ENCODE measurements at regions of chr1 and their contacts with region 1.

Region 1: DNA sequence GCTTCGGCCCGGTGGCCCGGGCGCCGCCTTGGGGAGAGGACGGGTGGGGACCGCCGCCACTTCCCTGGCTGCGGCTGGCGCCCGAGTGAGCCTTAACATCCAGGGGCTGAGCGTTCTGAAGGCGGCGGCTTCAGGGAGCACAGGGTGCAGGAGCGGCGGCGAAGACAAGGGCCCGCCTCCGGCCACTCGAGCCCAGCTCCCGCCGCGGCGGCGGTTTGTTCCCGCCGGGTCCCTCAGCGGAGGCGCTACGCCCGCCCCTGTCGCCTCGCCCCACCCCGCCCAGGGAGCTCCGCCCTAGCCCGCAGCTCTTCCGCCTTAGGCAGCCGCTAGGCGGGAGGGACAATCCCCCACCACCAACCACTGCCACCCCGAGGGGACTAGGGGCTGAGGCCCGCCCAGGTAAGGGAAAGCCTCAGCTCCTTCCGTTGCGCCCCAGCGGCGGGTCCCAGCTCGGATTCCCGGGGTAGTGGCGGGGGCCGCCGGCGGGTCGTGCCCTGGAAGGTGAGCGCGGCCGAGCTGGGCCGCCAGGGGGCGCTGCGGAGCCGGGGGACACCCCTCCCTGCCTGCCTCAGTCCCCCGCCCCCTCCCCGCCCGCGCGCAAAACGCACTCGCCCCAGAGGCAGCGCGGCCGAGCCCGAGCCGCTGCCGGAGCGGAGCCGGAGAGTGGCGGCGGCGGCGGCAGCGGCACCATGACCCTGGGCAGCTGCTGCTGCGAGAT is at the start of gene FOXD2:
- DNase-seq: peak; percentile 86
- ATAC-seq: peak; percentile 82
- H3K4me3 ChIP-seq: peak within 1 kb of the TSS; percentile 77
- H3K27ac ChIP-seq: no peak within 1 kb of the TSS
- H3K4me1 ChIP-seq: peaks cover 12% of the 10 kb centered on the region; the same call in 1 of the 2 replicates
- H3K27me3 ChIP-seq: no peaks in the 10 kb centered on the region
- CTCF ChIP-seq: peak; percentile 75
- total RNA-seq, gene FOXD2: 0.80 and 0.86 TPM in 2 replicates

Region 2: GRCh38 chr1:47333922-47334764 is 103.5 kb before region 1 on chr1:
- CTCF ChIA-PET with region 1: interaction called, 11 read pairs
- POLR2A ChIA-PET with region 1: interaction called, 8 read pairs
- intact Hi-C with region 1: no loop called
- DNase-seq: peak; percentile 81
- ATAC-seq: peak; percentile 86
- H3K4me3 ChIP-seq: peak overlapping the region; percentile 90
- H3K27ac ChIP-seq: peak overlapping the region; percentile 57
- H3K4me1 ChIP-seq: peaks cover 11% of the 10 kb centered on the region
- H3K27me3 ChIP-seq: no peaks in the 10 kb centered on the region
- CTCF ChIP-seq: no peak

Region 3: DNA sequence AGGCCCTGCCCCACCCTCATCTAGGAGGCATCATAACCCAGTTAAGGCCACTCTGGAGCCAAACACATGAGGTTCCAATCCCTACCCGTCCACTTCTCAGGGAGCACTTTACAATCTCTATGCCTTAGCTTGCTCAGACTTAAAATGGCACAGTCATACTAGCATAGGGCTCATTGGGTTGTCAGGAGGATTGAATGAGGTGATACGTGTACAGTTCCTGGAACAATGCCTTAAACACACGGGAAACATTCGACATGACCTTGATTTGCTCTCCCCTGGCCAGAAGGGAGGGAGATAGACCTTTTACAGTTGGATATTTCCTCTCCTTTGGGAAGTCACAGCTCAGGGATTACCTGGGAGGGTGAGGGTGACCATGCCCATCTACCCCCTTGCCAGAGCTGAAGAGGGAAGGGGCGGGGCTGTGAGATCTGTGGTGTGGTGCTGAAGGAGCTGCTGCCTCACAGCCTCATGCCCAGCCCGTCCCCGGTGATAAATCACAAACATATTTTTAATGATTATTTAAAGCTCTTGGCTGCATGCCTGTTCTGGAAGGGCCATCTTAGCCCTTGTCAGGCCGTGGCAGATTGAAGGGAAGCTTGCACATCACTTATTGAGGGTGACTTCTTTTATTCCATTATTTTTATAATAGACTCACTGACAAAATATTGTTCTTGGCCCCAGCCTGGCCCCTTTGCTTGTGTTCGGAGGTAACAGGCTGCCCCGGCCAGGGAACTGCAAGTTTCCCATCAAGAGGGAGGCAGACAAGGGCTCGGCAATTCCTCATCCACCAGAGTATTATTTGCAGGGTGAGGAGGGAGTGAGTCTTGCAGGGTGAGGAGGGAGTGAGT is 83.7 kb after region 1 on chr1:
- CTCF ChIA-PET with region 1: interaction called, 10 read pairs
- POLR2A ChIA-PET with region 1: no interaction called
- intact Hi-C with region 1: no loop called
- DNase-seq: no peak
- ATAC-seq: no peak
- H3K4me3 ChIP-seq: no peak overlapping the region
- H3K27ac ChIP-seq: no peak overlapping the region
- H3K4me1 ChIP-seq: no peaks in the 10 kb centered on the region
- H3K27me3 ChIP-seq: no peaks in the 10 kb centered on the region
- CTCF ChIP-seq: no peak

Region 4: GRCh38 chr1:47710329-47711071 is 272.9 kb after region 1 on chr1:
- CTCF ChIA-PET with region 1: interaction called, 11 read pairs
- POLR2A ChIA-PET with region 1: no interaction called
- intact Hi-C with region 1: loop called (anchors 1 kb)
- DNase-seq: peak; percentile 77
- ATAC-seq: peak; percentile 89
- H3K4me3 ChIP-seq: peak overlapping the region; percentile 66
- H3K27ac ChIP-seq: no peak overlapping the region
- H3K4me1 ChIP-seq: peaks cover 17% of the 10 kb centered on the region
- H3K27me3 ChIP-seq: peaks cover 84% of the 10 kb centered on the region
- CTCF ChIP-seq: peak; percentile 92

Region 5: GRCh38 chr1:47927165-47927564 is 489.6 kb after region 1 on chr1:
- CTCF ChIA-PET with region 1: no interaction called
- POLR2A ChIA-PET with region 1: no interaction called
- intact Hi-C with region 1: loop called (anchors 5 kb)
- DNase-seq: peak; percentile 94
- ATAC-seq: peak; percentile 76
- H3K4me3 ChIP-seq: no peak overlapping the region
- H3K27ac ChIP-seq: peak overlapping the region; percentile 89
- H3K4me1 ChIP-seq: peaks cover 39% of the 10 kb centered on the region
- H3K27me3 ChIP-seq: no peaks in the 10 kb centered on the region
- CTCF ChIP-seq: no peak